Activated CD8-positive, alpha-beta T cell treated with anti-CD3 and anti-CD28 coated beads for 36 hours (primary cell): ENCODE measurements at regions of chr11 and their contacts with region 1.

Region 1: GRCh38 chr11:60615497-60615896 is 83.9 kb upstream of the MS4A8 start:
- DNase-seq: no peak
- ATAC-seq: no peak
- H3K4me3 Mint-ChIP-seq: no peak overlapping the region
- H3K27ac Mint-ChIP-seq: no peak overlapping the region
- H3K4me1 Mint-ChIP-seq: no peaks in the 10 kb centered on the region
- H3K27me3 Mint-ChIP-seq: peaks cover 10% of the 10 kb centered on the region
- CTCF ChIP-seq: no peak

Region 2: DNA sequence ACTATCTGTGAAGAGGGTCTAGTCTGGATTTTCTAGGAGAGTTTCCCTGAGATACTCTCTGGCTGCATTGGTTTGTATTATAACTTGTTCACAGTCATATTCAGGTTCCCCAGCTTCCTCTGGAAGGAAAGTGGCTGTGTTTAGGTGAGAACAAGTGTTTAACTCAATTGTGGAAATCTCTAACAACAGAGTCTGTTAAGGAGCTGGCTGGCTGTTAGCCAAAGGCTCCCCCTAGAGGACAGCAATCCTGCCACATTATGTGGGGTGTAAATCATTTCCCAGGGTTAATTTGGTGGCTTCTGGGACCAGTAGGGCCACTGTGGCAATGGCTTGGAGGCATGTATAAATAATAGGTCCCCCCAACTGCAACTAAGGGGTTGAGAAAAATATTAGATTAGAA is 270.0 kb before region 1 on chr11:
- CTCF ChIA-PET with region 1: interaction called, 3 read pairs
- POLR2A ChIA-PET with region 1: no interaction called
- intact Hi-C with region 1: loop called (anchors 5 kb)
- DNase-seq: peak; percentile 52
- ATAC-seq: no peak
- H3K4me3 Mint-ChIP-seq: no peak overlapping the region
- H3K27ac Mint-ChIP-seq: no peak overlapping the region
- H3K4me1 Mint-ChIP-seq: no peaks in the 10 kb centered on the region
- H3K27me3 Mint-ChIP-seq: peaks cover 17% of the 10 kb centered on the region
- CTCF ChIP-seq: peak; percentile 41